Activated B cell treated with CpG ODN at 0.5 μM for 24 hours (primary cell): ENCODE measurements at regions of chr18 and their contacts with region 1.

Region 1: DNA sequence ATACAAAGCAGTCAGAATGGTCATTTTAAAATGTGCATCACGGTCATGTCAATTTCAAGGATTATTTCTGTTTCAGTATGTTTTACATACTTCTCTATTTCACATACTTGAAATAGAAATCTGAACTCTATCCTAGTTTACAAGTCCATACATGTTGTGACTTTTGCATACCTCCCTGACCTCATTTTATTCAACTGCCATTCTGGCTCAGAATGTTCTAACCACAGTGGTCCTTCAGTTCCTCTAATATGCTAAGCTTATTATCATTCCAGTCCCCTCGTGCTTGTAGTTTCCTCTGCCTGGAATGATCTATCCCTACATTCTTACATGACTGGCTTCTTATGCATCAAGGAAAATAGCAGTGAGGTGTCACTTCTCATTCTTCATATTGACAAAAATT is 295.6 kb downstream of the KIAA1328 start:
- DNase-seq: no peak
- ATAC-seq: no peak
- H3K4me3 Mint-ChIP-seq: no peak overlapping the region
- H3K27ac Mint-ChIP-seq: no peak overlapping the region
- H3K4me1 Mint-ChIP-seq: no peaks in the 10 kb centered on the region
- H3K27me3 Mint-ChIP-seq: no peaks in the 10 kb centered on the region
- CTCF ChIP-seq: no peak

Region 2: GRCh38 chr18:37156330-37156942 is 31.9 kb after region 1 on chr18:
- CTCF ChIA-PET with region 1: no interaction called
- POLR2A ChIA-PET with region 1: no interaction called
- intact Hi-C with region 1: no loop called
- DNase-seq: no peak
- ATAC-seq: no peak
- H3K4me3 Mint-ChIP-seq: no peak overlapping the region
- H3K27ac Mint-ChIP-seq: no peak overlapping the region
- H3K4me1 Mint-ChIP-seq: no peaks in the 10 kb centered on the region
- H3K27me3 Mint-ChIP-seq: no peaks in the 10 kb centered on the region
- CTCF ChIP-seq: no peak

Region 3: GRCh38 chr18:37170984-37171383 is 46.5 kb after region 1 on chr18:
- CTCF ChIA-PET with region 1: no interaction called
- POLR2A ChIA-PET with region 1: no interaction called
- intact Hi-C with region 1: loop called (anchors 5 kb)
- DNase-seq: no peak
- ATAC-seq: no peak
- H3K4me3 Mint-ChIP-seq: no peak overlapping the region
- H3K27ac Mint-ChIP-seq: no peak overlapping the region
- H3K4me1 Mint-ChIP-seq: no peaks in the 10 kb centered on the region
- H3K27me3 Mint-ChIP-seq: no peaks in the 10 kb centered on the region
- CTCF ChIP-seq: no peak